ENCODE measurements at regions of chr7 and their contacts with region 1.

Region 1: GRCh38 chr7:31744294-31744874 is 57.4 kb downstream of the PPP1R17 start:
- DNase-seq: no peak

Region 2: GRCh38 chr7:32204361-32205018 is 460.1 kb after region 1 on chr7:
- intact Hi-C with region 1: loop called (anchors 2 kb)
- DNase-seq: peak; percentile 82

Region 3: DNA sequence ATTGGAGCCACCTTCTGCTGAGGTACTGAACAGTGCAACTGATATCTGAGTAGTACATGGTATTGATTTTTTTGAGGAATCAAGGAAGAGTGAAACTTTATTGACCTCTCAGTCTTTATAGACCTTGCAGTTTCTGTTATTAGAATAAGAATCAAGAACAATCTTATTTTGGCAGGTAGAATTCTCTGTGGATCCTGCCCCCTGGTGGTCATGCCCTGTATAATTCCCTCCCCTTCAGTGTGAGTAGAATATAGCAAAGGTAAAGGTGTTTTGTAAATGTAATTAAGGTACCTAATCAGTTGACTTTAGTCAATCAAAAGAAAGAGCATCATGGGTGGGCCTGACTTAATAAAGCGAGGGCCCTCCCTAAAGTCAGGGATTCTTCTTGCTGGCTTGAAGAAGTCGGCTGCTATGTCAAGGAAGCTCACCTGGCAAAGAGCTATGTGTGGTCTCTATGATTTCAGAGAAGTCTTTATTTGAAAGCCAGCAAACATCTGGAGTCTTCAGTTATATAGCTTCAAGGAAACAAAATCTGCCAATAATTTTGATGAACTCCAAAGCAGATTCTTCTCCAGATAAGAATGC is 603.0 kb after region 1 on chr7:
- intact Hi-C with region 1: loop called (anchors 10 kb)
- DNase-seq: no peak

Region 4: DNA sequence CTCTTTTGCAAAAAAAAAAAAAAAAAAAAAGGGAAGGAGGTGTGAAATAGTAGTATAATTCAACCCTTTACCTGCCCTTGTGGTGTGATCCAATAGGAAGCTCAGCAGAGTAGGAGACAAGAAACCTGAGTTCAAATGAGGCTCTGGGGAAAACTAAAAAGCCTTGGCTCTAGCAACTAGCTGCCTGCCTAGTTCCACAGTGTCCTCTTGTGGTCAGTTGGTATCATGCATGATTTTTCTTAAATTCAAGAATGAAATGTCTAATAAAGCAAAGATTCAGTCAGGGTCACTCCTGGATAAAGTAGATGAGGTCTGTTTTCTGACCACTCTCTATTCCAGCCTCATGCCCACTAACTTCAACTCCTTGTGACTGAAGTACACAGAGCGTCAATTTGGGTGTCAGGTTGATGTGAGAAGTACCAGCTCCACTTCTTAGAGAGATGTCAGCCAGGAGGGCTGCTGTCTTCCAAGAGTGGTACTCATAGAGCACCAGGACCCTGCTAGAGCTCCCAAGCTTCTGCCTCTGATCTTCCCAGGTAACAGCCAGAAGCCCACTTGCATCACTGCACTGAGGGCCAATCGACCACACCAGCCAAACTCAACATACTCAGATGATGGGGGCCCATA is 735.3 kb after region 1 on chr7:
- intact Hi-C with region 1: loop called (anchors 10 kb)
- DNase-seq: no peak

Measured in cardiac septum (tissue), 1 donor.